Lower leg skin (tissue), 4 donors: ENCODE measurements at regions of chr3 and their contacts with region 1.

Region 1: GRCh38 chr3:4722103-4722502 is 229.0 kb downstream of the ITPR1 start:
- DNase-seq: peak in 1 of 2 donors; percentile 81
- H3K4me3 ChIP-seq: no peak overlapping the region
- CTCF ChIP-seq: no peak
- POLR2A ChIP-seq: no peak

Region 2: GRCh38 chr3:4978204-4978965 is 256.3 kb after region 1 on chr3:
- intact Hi-C with region 1: loop called (anchors 5 kb)
- DNase-seq: peak; percentile 96 to 99
- H3K4me3 ChIP-seq: peak overlapping the region; percentile 33
- CTCF ChIP-seq: no peak
- POLR2A ChIP-seq: no peak